ENCODE measurements at regions of chr1 and their contacts with region 1.

Region 1: GRCh38 chr1:228405987-228406265 is 709 bp downstream of the TRIM11 start:
- DNase-seq: no peak
- H3K4me3 ChIP-seq: peak overlapping the region; percentile 89 to 95
- H3K27ac ChIP-seq: peak overlapping the region; percentile 76 to 78
- H3K4me1 ChIP-seq: peaks cover 17 to 28% of the 10 kb centered on the region in 2 donors
- H3K27me3 ChIP-seq: no peaks in the 10 kb centered on the region
- CTCF ChIP-seq: no peak

Region 2: GRCh38 chr1:228165372-228166169 is 240.4 kb before region 1 on chr1 and contains the start of gene IBA57:
- intact Hi-C with region 1: loop called (anchors 2 kb)
- DNase-seq: peak; percentile 96 to 99
- H3K4me3 ChIP-seq: peak within 1 kb of the TSS; percentile 80 to 91
- H3K27ac ChIP-seq: peak within 1 kb of the TSS; percentile 94 to 98
- H3K4me1 ChIP-seq: peaks cover 0 to 11% of the 10 kb centered on the region in 2 donors
- H3K27me3 ChIP-seq: no peaks in the 10 kb centered on the region
- CTCF ChIP-seq: peak; percentile 84 to 97 (median 87)
- total RNA-seq, gene IBA57: 55.6 TPM

Region 3: GRCh38 chr1:228275739-228276421 is 130.0 kb before region 1 on chr1:
- intact Hi-C with region 1: loop called (anchors 2 kb)
- DNase-seq: peak; percentile 73 to 93
- H3K4me3 ChIP-seq: peak overlapping the region; percentile 68 to 88
- H3K27ac ChIP-seq: peak overlapping the region; percentile 47 to 76
- H3K4me1 ChIP-seq: peaks cover 0 to 10% of the 10 kb centered on the region in 2 donors
- H3K27me3 ChIP-seq: no peaks in the 10 kb centered on the region
- CTCF ChIP-seq: no peak

Region 4: DNA sequence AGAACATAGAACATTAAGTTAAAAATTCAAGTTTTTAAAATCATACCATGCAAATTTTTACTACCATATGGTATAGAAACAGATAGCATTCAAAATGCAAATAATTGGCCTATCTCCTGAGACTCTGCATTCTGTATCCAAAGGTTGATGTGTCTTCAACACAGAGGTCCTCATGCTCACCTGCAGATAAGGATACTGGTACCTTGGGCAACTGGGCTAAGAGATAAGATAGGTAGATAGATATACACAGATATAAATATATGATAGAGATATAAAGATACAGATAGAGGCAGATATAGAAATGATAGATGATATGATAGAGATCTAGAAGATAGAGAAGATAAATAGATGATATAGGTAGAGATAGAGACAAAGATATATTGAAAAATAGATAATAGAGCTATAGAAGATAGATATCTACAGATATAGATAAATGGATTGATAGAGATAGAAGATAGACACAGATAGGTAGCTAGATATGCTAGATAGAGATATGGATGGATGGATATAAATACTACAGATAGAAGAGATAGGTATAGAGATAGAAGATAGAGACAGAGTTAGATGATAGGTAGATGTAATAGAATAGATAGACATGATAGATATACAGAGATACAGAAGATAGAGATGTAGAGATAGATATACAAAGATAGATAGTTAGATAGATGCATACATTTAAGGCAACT is 20.8 kb before region 1 on chr1:
- intact Hi-C with region 1: no loop called
- DNase-seq: no peak
- H3K4me3 ChIP-seq: no peak overlapping the region
- H3K27ac ChIP-seq: no peak overlapping the region
- H3K4me1 ChIP-seq: no peaks in the 10 kb centered on the region
- H3K27me3 ChIP-seq: no peaks in the 10 kb centered on the region
- CTCF ChIP-seq: no peak

Region 5: DNA sequence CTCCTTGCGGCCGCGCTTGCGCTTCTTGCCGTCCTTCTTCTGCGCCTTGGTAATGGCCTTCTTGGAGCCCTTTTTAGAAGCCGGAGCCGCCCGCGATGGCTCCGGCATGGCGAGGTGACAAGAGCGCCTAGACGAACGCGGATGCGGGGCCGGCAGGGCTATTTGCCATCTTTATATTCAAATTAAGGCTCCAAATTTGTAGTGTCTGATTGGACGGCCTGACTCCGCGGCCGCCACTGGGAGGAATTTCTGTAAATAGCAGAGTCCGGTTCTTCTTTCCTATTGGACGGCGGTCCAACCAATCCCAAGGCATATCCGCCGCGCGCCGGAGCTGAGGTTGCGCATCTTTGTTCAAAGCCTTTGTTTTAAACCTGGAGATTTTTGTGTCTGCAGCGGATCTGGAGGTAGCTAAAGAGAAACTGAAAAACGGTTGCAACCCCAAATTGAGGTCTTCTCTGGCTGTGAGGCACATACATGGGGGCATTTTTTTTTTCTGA is 58.6 kb after region 1 on chr1:
- intact Hi-C with region 1: loop called (anchors 5 kb)
- DNase-seq: peak in 1 of 2 donors; percentile 80
- H3K4me3 ChIP-seq: peak overlapping the region; percentile 21 to 52
- H3K27ac ChIP-seq: no peak overlapping the region
- H3K4me1 ChIP-seq: no peaks in the 10 kb centered on the region
- H3K27me3 ChIP-seq: peaks cover 1% of the 10 kb centered on the region
- CTCF ChIP-seq: no peak

Region 6: GRCh38 chr1:229109320-229109761 is 703.4 kb after region 1 on chr1:
- intact Hi-C with region 1: loop called (anchors 5 kb)
- DNase-seq: peak; percentile 35 to 81
- H3K4me3 ChIP-seq: no peak overlapping the region
- H3K27ac ChIP-seq: peak overlapping the region; percentile 86 to 88
- H3K4me1 ChIP-seq: peaks cover 27 to 59% of the 10 kb centered on the region in 2 donors
- H3K27me3 ChIP-seq: no peaks in the 10 kb centered on the region
- CTCF ChIP-seq: no peak